Natural killer cell (primary cell): ENCODE measurements at regions of chr22 and their contacts with region 1.

Region 1: DNA sequence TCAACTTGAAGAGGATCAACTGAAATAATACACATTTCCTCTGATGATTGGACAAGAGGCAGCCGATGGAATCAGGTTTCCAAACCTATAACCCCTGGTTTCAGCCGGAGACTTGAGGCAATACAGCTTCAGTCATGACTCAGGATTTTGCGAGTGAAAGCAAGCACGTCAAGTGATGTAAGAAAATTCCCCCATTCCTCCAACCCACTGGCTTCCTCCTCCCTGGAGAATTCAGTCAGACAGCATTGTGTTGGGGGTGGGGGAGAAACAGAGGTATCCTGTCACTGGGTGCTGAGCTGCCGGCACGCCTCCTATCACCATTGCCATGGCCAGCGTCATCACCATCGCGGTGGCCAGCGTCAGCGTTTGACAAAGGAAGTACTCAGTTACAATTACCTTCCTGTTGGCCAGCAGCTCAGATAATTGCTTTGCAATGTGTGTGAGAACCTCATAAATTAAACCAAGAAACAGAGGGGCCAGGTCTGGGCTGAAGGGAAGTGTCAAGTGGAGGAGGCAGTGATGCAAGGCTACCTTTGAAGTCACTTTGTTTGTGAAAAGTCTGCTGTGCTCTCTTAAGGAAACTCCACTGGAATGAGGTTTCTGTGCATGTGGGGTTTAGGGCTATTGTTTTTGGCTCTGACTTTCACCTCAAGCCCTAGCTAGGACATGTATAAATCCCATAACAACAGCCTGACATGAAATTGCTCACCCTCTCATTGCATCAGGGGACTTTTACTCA is 50.2 kb downstream of the LIF start:
- DNase-seq: peak; percentile 76 to 82
- ATAC-seq: peak; percentile 84 to 96 (median 87)
- H3K4me3 ChIP-seq: no peak overlapping the region
- H3K4me3 Mint-ChIP-seq: peak overlapping the region; percentile 60
- H3K27ac ChIP-seq: peak overlapping the region; percentile 76
- H3K27ac Mint-ChIP-seq: peak overlapping the region; percentile 85 to 88
- H3K4me1 ChIP-seq: peaks cover 35% of the 10 kb centered on the region
- H3K4me1 Mint-ChIP-seq: peaks cover 45 to 58% of the 10 kb centered on the region in 2 donors
- H3K27me3 ChIP-seq: no peaks in the 10 kb centered on the region
- H3K27me3 Mint-ChIP-seq: no peaks in the 10 kb centered on the region
- CTCF ChIP-seq: no peak

Region 2: GRCh38 chr22:30104501-30105156 is 91.7 kb before region 1 on chr22:
- intact Hi-C with region 1: loop called (anchors 2 kb)
- DNase-seq: peak in 1 of 2 donors; percentile 44
- ATAC-seq: no peak
- H3K4me3 ChIP-seq: no peak overlapping the region
- H3K4me3 Mint-ChIP-seq: no peak overlapping the region
- H3K27ac ChIP-seq: no peak overlapping the region
- H3K27ac Mint-ChIP-seq: no peak overlapping the region
- H3K4me1 ChIP-seq: peaks cover 3% of the 10 kb centered on the region
- H3K4me1 Mint-ChIP-seq: peaks cover 0 to 5% of the 10 kb centered on the region in 2 donors
- H3K27me3 ChIP-seq: no peaks in the 10 kb centered on the region
- H3K27me3 Mint-ChIP-seq: peaks cover 0 to 6% of the 10 kb centered on the region in 2 donors
- CTCF ChIP-seq: no peak

Region 3: GRCh38 chr22:30212363-30212995 is 16.2 kb after region 1 on chr22:
- intact Hi-C with region 1: loop called (anchors 2 kb)
- DNase-seq: no peak
- ATAC-seq: peak; percentile 72 to 88 (median 86)
- H3K4me3 ChIP-seq: no peak overlapping the region
- H3K4me3 Mint-ChIP-seq: no peak overlapping the region
- H3K27ac ChIP-seq: no peak overlapping the region
- H3K27ac Mint-ChIP-seq: peak overlapping the region; percentile 51 to 74
- H3K4me1 ChIP-seq: peaks cover 26% of the 10 kb centered on the region
- H3K4me1 Mint-ChIP-seq: peaks cover 16 to 20% of the 10 kb centered on the region in 2 donors
- H3K27me3 ChIP-seq: no peaks in the 10 kb centered on the region
- H3K27me3 Mint-ChIP-seq: no peaks in the 10 kb centered on the region
- CTCF ChIP-seq: no peak

Region 4: DNA sequence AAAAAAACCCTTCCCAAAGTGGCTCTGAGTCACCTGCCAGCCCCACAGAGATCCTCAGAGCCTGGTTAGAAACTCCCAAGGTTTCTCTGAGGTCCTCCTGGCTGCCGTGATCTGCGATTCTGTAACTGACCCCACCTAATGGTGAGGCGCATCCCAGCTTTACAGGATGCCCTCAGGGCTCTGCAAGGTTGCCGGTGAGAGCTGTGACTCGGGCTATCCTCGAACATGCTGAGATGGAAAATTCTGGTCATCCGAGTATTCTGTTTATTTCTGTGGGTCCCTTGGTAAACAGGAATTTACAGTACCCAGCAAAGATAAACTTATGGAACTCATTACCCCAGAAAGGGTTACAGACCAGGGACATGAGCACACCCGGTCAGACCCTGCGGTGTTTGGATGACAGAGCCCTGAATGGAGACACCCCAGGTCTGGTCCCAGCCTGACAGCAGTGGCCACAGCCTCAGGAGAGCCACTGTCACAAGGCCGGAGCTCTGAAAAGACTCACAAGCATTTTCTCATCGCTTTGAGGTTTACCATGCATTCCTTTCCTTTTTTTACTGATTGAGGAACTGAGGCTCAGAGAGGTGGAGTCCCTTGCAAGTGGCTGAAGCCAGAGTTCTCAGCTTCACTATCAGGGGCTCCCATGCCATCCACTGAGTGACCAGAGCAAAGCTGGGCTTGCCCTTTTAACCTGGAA is 28.0 kb after region 1 on chr22:
- intact Hi-C with region 1: loop called (anchors 1 kb)
- DNase-seq: no peak
- ATAC-seq: no peak
- H3K4me3 ChIP-seq: no peak overlapping the region
- H3K4me3 Mint-ChIP-seq: no peak overlapping the region
- H3K27ac ChIP-seq: no peak overlapping the region
- H3K27ac Mint-ChIP-seq: peak overlapping the region in 1 of 2 donors; percentile 93
- H3K4me1 ChIP-seq: peaks cover 92% of the 10 kb centered on the region
- H3K4me1 Mint-ChIP-seq: peaks cover 78 to 88% of the 10 kb centered on the region in 2 donors
- H3K27me3 ChIP-seq: no peaks in the 10 kb centered on the region
- H3K27me3 Mint-ChIP-seq: no peaks in the 10 kb centered on the region
- CTCF ChIP-seq: no peak

Region 5: DNA sequence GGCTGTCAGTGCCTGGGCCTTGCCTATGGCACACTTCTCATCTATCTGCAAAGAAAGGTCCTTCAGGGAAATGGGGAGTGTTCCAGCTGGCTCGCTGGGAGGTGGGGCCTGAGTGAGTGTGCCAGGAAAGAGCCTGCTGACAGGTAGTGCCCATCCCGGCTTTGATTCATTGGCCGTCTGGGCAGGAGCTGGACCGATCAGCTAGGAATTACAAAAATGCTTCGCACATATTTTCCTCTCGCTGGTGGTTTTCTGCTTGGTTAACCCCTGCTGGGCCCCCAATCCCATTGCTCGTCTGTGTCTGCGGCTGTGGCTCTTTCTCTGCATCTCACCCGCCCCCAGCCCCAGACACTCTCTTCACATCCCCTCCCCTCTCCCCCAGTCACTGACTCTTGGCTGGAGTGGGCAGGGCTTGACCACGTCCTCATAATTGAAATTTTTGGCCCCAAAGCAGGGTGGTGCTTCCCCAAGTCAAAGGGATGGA is 39.4 kb after region 1 on chr22:
- intact Hi-C with region 1: loop called (anchors 5 kb)
- DNase-seq: no peak
- ATAC-seq: no peak
- H3K4me3 ChIP-seq: no peak overlapping the region
- H3K4me3 Mint-ChIP-seq: no peak overlapping the region
- H3K27ac ChIP-seq: no peak overlapping the region
- H3K27ac Mint-ChIP-seq: no peak overlapping the region
- H3K4me1 ChIP-seq: no peaks in the 10 kb centered on the region
- H3K4me1 Mint-ChIP-seq: peaks cover 1% of the 10 kb centered on the region in 2 donors
- H3K27me3 ChIP-seq: no peaks in the 10 kb centered on the region
- H3K27me3 Mint-ChIP-seq: no peaks in the 10 kb centered on the region
- CTCF ChIP-seq: no peak

Region 6: GRCh38 chr22:30262917-30263741 is 66.8 kb after region 1 on chr22:
- intact Hi-C with region 1: loop called (anchors 1 kb)
- DNase-seq: peak; percentile 76 to 88
- ATAC-seq: no peak
- H3K4me3 ChIP-seq: no peak overlapping the region
- H3K4me3 Mint-ChIP-seq: peak overlapping the region; percentile 28
- H3K27ac ChIP-seq: no peak overlapping the region
- H3K27ac Mint-ChIP-seq: peak overlapping the region; percentile 34 to 84
- H3K4me1 ChIP-seq: peaks cover 61% of the 10 kb centered on the region
- H3K4me1 Mint-ChIP-seq: peaks cover 29 to 52% of the 10 kb centered on the region in 2 donors
- H3K27me3 ChIP-seq: no peaks in the 10 kb centered on the region
- H3K27me3 Mint-ChIP-seq: no peaks in the 10 kb centered on the region
- CTCF ChIP-seq: peak; percentile 100

Region 7: DNA sequence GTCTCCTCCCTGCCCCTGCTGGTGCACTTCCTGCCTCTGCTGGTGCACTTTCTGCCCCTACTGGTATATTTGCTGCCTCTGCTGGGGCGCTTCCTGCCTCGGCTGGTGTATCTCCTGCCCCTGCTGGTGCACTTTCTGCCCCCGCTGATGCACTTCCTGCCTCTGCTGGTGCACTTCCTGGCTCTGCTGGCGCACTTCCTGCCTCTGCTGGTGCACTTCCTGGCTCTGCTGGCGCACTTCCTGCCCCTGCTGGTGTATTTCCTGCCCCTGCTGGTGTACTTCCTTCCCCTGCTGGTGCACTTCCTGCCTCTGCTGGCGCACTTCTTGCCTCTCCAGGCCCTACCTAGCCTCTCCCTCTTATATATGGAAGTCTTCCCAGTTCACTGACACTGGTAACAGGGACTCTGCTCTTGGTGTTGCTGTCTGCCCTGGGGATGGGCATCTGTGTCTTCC is 239.4 kb after region 1 on chr22:
- intact Hi-C with region 1: loop called (anchors 5 kb)
- DNase-seq: peak; percentile 60 to 95
- ATAC-seq: peak; percentile 90 to 92 (median 92)
- H3K4me3 ChIP-seq: peak overlapping the region; percentile 6
- H3K4me3 Mint-ChIP-seq: peak overlapping the region; percentile 80
- H3K27ac ChIP-seq: peak overlapping the region; percentile 87
- H3K27ac Mint-ChIP-seq: peak overlapping the region; percentile 92
- H3K4me1 ChIP-seq: peaks cover 19% of the 10 kb centered on the region
- H3K4me1 Mint-ChIP-seq: peaks cover 16 to 25% of the 10 kb centered on the region in 2 donors
- H3K27me3 ChIP-seq: no peaks in the 10 kb centered on the region
- H3K27me3 Mint-ChIP-seq: peaks cover 15 to 27% of the 10 kb centered on the region in 2 donors
- CTCF ChIP-seq: peak; percentile 38